ENCODE measurements at regions of chr13 and their contacts with region 1.

Region 1: DNA sequence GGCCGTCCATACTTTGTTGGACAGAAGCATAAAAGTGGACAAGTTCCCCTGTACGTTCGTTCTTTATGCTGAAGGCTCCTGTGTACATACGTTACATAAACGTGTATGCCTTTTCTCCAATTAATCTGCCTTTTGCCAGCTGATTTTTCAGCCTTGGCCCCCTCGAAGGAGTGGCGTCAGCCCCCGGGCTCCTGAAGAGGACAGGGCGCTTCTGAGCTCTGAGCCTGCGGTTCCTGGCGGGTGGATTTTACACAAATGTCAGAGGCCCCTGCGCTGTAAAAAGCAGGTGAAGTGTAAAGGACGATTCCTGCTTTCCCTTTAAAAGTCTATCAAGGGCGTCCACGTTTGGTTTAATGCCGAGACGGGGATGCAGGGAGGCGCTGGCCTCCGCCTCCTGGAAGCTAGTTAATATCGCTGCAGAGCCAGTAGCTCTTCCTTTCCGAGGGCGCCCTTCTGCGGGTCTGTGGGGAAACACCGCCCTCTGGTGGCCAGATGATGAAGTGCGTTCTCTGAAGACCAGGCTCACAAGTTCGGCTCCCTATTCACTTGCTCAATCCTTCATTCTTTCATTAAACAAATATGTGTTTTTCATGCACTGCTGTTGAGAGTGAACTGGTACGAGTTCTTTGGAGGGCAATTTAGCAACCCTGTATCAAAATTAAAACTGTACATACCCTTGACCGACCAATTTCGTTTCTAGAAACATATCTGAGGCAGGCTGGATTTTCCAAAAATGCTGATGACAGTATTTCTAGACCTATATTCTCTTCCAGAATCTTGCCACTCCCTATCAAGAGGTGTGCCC is 62.0 kb downstream of the GPR12 start:
- DNase-seq: peak; percentile 83
- ATAC-seq: peak; percentile 84 to 91

Region 2: DNA sequence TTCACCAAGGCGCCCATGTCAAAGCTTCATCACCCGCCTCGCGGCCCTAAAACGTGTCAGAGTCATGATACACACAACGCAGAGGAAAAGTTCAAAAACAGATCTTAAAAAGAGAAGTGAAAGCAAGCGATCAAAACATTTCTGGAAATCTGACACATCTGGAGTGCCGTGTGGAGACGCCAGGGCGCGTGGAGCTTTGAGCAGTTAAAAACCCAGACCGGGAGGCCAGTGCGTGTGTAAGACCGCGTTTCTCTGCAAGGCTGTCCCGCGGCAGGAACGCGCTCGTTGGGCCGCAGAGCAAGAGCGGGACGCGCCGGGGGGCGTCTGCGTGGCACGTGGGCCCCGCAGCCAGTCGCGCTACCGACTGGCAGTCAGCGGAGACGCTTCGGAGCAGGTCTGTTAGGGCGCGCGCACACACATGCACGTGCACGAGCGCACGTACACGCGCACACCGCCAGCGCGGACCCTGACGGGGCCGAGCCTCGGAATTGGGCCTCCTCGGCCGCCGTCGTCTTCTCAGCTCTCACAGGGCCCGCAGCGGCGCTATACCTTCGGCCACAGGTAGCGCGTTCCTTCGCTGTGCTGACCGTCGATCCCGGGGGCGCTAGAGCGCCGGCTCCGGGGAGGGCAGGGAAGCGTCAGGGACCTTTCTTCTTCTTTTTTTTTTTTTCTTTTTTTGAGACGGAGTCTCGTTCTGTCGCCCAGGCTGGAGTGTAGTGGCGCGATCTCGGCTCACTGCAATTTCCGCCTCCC is 512.3 kb before region 1 on chr13:
- intact Hi-C with region 1: loop called (anchors 2 to 5 kb)
- DNase-seq: peak; percentile 91
- ATAC-seq: peak; percentile 95 to 98

Region 3: DNA sequence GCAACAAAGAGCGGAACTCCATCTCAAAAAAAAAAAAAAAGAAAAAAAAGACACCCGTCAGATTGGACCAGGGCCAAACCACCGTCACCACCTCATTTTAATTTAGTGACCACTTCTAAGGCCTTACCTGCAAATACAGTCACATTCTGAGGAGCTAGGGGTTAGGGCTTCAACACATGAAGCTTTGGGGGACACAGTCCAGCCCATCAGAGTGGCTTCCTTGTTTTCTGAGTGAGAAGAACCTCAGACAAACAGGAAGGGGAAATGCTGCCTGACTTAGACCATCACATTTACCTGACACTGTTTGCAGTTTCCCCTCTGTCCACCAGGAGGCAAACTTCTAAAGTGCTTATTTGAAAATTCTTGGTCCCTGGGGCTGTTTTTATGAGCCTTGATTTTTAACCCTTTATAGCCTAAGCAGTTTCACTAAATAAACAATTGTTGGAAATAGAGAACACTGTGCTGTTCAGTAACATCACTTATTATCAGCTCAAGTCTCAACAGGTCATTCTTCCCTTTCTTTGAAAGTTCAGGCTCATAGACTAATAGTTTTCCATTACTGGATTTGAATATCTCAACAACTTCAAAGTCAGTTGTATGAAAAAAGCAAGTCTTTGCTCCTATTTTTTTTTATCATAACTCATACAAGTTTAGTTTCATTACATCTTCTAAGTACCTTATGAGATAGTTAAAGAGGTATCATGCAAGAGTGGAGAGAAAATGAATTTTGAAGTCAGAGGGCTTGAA is 216.0 kb before region 1 on chr13:
- intact Hi-C with region 1: loop called (anchors 2 to 5 kb)
- DNase-seq: peak; percentile 55
- ATAC-seq: peak in 1 of 2 donors; percentile 24

Region 4: GRCh38 chr13:26779321-26779720 is 80.7 kb after region 1 on chr13:
- intact Hi-C with region 1: no loop called
- DNase-seq: no peak
- ATAC-seq: no peak